Activated naive CD4-positive, alpha-beta T cell treated with anti-CD3 and anti-CD28 coated beads, Interleukin-2, amount 10 ng/mL, durations not matched to agents 7 days and 5 days (primary cell): ENCODE measurements at regions of chr9 and their contacts with region 1.

Region 1: GRCh38 chr9:96327694-96328352 is 25.8 kb upstream of the HSD17B3 start:
- DNase-seq: peak; percentile 58
- H3K4me3 Mint-ChIP-seq: no peak overlapping the region
- H3K27ac Mint-ChIP-seq: no peak overlapping the region
- H3K4me1 Mint-ChIP-seq: no peaks in the 10 kb centered on the region
- H3K27me3 Mint-ChIP-seq: peaks cover 4% of the 10 kb centered on the region

Region 2: DNA sequence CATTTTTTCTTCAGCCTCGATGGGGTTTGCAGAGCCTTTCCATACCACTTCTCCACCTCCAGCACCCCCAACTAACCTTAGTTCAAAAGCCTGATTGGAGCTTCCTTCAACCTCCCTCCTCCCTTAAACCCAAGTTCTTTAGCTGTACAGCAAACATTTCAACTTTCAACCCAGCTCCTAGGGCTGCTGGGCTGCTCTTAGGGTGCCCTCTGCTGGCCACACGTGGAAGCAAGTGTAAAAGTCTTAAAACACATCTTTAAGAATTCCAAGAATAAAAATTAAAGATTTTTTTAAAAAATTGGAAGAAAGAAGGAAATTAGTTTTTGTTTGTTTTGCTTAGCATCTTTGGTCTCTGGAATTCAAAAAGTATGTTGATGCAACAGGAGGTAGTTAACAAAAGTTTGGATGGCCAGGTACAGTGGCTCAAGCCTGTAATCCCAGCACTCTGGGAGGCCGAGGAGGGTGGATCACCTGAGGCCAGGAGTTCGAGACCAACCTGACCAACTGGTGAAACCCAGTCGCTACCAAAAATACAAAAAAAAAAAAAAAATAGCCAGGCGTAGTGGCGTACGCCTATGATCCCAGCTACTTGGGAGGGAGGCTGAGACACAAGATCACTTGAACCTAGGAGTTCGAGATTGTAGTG is 10.4 kb before region 1 on chr9:
- CTCF ChIA-PET with region 1: interaction called, 11 read pairs
- DNase-seq: peak; percentile 59
- H3K4me3 Mint-ChIP-seq: no peak overlapping the region
- H3K27ac Mint-ChIP-seq: no peak overlapping the region
- H3K4me1 Mint-ChIP-seq: no peaks in the 10 kb centered on the region
- H3K27me3 Mint-ChIP-seq: peaks cover 4% of the 10 kb centered on the region

Region 3: DNA sequence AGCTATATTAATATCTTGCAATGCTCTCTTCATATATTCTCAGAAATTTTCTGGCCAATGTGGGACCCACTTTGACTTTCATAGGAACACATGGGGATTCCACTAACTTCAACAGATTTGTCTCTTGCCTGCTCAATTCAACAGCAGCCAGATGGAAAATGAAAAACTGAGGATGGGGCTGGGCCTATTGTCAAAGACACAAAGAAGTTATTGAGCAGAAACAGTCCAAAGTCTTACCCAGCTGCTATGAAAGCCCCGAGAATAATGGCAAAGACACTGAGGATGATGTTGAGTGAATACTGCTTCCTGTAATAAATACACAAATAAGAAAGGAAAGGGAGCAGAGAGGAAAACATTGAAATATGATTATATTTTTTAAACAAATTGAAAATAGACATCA is 23.0 kb after region 1 on chr9:
- CTCF ChIA-PET with region 1: no interaction called
- DNase-seq: no peak
- H3K4me3 Mint-ChIP-seq: no peak overlapping the region
- H3K27ac Mint-ChIP-seq: no peak overlapping the region
- H3K4me1 Mint-ChIP-seq: no peaks in the 10 kb centered on the region
- H3K27me3 Mint-ChIP-seq: no peaks in the 10 kb centered on the region

Region 4: DNA sequence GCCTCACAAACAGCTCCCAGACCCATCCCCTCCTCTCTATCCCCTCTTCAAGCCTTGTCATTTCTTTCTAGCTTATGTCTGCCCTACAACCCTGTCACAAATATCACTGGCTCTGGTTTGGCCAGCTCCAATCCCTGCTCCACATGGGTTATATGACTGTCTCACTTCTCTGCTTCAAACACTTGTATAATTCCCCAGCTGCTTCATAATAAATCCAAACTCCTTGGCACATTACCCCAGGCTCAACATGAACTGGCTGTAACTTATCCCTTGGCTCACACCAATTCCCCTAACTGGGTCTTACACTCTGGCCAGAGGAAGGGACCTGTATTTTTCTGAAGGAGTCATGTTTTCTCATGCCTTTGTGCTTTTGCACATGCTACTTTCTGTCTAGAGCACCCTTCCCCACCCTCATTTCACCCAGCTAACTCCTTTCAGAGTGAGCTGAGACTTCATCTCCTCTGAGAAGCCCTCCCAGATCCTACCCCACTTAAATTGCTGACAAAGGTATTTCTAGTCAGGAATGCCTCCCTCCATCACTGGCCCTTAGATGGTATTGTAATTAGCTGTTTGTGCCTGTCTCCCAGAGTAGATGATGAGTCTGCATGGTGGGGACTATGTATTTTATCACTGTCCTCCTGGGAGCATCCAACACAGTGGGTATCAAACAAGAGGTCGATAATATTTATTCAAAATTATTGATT is 321.9 kb after region 1 on chr9:
- CTCF ChIA-PET with region 1: interaction called, 12 read pairs
- DNase-seq: no peak
- H3K4me3 Mint-ChIP-seq: no peak overlapping the region
- H3K27ac Mint-ChIP-seq: no peak overlapping the region
- H3K4me1 Mint-ChIP-seq: peaks cover 6% of the 10 kb centered on the region
- H3K27me3 Mint-ChIP-seq: no peaks in the 10 kb centered on the region